CD8-positive, alpha-beta T cell (primary cell): ENCODE measurements at regions of chr14 and their contacts with region 1.

Region 1: GRCh38 chr14:80862983-80863382 is 78.6 kb downstream of the CEP128 start:
- DNase-seq: no peak
- ATAC-seq: no peak
- H3K4me3 ChIP-seq: no peak overlapping the region
- H3K4me3 Mint-ChIP-seq: no peak overlapping the region
- H3K27ac ChIP-seq: no peak overlapping the region
- H3K27ac Mint-ChIP-seq: no peak overlapping the region
- H3K4me1 ChIP-seq: no peaks in the 10 kb centered on the region
- H3K4me1 Mint-ChIP-seq: no peaks in the 10 kb centered on the region
- H3K27me3 ChIP-seq: no peaks in the 10 kb centered on the region
- H3K27me3 Mint-ChIP-seq: no peaks in the 10 kb centered on the region
- CTCF ChIP-seq: no peak

Region 2: DNA sequence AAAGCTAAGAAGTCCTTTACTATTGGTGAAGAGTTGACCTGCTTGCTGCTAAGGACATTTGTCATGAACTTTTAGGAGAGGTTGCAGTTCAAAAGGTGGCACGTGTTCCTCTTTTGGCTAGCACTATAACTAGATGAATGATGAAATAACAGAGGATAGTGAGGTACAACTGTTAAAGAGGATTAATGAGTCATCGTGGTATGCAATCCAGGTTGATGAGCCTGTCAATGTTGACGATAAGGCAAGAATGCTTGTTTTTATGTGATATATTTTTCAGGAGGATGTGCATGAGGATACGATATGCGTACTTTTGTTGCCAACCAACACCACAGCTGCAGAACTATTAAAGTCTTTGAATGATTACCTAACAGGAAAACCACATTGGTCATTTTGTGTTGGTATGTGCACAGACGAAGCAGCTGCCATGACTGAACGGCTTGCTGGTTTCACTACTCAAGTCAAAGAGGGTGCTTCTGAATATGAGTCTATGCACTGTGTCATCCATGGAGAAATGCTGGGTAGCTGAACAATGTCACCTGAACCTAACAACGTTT is 67.9 kb after region 1 on chr14:
- CTCF ChIA-PET with region 1: no interaction called
- POLR2A ChIA-PET with region 1: no interaction called
- intact Hi-C with region 1: loop called in 1 of 2 experiments (anchors 10 kb)
- DNase-seq: peak in 7 of 9 experiments; percentile 21 to 88 (median 51)
- ATAC-seq: peak; percentile 90
- H3K4me3 ChIP-seq: peak overlapping the region in 1 of 2 experiments; percentile 16
- H3K4me3 Mint-ChIP-seq: peak overlapping the region; percentile 42
- H3K27ac ChIP-seq: peak overlapping the region; percentile 36 to 44
- H3K27ac Mint-ChIP-seq: peak overlapping the region; percentile 93
- H3K4me1 ChIP-seq: peaks cover 19% of the 10 kb centered on the region
- H3K4me1 Mint-ChIP-seq: peaks cover 34% of the 10 kb centered on the region
- H3K27me3 ChIP-seq: no peaks in the 10 kb centered on the region
- H3K27me3 Mint-ChIP-seq: no peaks in the 10 kb centered on the region
- CTCF ChIP-seq: no peak